Testis (tissue), 5 donors: ENCODE measurements at regions of chr12 and their contacts with region 1.

Region 1: GRCh38 chr12:110698171-110698902 is 9.4 kb upstream of the HVCN1 start:
- DNase-seq: peak; percentile 88
- H3K4me3 ChIP-seq: no peak overlapping the region
- H3K27ac ChIP-seq: peak overlapping the region; percentile 41 to 76
- H3K4me1 ChIP-seq: peaks cover 26% of the 10 kb centered on the region
- H3K27me3 ChIP-seq: no peaks in the 10 kb centered on the region
- CTCF ChIP-seq: peak; percentile 65 to 83 (median 82)
- POLR2A ChIP-seq: no peak

Region 2: DNA sequence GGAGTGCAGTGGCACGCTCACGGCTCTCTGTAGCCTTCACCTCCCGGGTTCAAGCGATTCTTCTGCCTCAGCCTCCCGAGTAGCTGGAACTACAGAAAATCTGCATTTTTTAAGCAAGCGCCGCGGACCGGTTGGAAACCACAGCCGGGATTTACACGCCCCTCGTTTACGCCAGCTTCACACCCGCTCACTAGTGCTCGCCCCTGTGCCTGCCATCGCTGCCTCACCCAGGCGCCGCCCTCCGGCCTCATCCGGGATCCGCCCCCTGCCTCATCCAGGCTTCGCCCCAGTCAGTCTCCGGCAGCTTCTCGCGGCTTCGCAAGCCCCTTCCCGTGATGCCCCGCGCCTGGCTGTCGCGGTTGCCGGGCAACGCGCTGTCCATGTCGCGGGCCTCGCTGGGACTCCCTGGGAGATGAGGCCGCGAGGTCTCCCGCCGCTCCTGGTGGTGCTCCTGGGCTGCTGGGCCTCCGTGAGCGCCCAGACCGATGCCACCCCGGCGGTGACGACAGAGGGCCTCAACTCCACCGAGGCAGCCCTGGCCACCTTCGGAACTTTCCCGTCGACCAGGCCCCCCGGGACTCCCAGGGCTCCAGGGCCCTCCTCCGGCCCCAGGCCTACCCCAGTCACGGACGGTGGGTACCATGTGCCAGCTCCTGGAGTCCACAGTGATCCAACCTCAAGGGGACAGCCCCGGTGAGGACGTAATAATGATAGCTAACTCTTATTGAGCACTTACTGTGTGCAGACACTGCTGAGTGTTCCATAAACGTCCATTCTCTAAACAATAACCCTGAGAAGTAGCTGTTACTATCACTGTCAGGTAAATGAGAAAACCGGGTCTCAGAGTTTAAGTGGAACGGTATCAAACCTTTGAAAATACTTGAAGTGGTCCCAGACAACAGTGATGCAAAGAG is 84.3 kb before region 1 on chr12 and contains the start of gene TCTN1:
- intact Hi-C with region 1: loop called (anchors 10 kb)
- DNase-seq: peak; percentile 98
- H3K4me3 ChIP-seq: peak within 1 kb of the TSS; percentile 69 to 70
- H3K27ac ChIP-seq: peak within 1 kb of the TSS; percentile 32 to 70
- H3K4me1 ChIP-seq: peaks cover 7% of the 10 kb centered on the region
- H3K27me3 ChIP-seq: no peaks in the 10 kb centered on the region
- CTCF ChIP-seq: no peak
- POLR2A ChIP-seq: peak; percentile 50
- total RNA-seq, gene TCTN1: 75.3 to 109 TPM

Region 3: DNA sequence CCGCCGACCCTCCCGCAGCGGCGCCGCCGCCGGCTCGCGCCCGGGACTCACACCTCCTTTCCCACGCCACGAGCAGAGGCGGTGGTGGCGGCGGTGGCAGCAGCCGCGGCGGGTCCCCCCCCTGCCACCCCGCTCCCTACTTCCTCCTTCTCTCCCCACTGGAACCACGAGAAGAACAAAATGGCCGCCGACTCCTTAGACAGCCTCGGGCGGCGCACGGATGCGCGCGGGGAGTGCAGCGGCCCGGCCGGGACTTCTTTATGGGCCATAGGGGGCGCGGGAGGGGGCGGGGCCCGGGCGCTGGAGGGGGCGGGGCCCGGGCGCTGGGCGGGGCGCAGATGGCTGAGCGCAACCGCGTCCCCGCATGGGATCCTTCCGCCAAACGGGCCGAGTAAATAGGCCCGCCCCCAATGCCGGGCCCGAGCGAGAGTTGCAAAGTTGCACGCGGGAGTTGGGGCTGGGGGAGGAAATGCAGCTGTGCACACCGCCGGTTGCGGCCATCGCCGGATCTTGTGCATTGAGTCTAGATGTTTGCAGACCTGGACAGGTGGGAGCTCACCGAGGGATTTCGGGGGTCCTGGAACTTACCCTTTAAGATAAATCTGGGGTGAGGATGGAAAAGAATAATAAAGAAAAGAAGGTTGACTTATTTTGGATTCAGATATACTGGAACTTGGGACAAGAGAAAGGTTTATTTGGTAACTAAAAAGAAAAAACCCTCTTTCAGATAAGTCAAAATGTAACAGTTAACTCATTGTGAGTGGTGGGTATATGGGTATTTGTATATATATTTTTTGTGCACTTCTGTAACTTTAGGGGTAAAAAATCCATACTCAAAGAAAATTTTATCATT is 44.6 kb after region 1 on chr12 and contains the start of gene PPP1CC:
- intact Hi-C with region 1: no loop called
- DNase-seq: peak; percentile 97
- H3K4me3 ChIP-seq: peak within 1 kb of the TSS; percentile 99 to 100
- H3K27ac ChIP-seq: peak within 1 kb of the TSS; percentile 89 to 95
- H3K4me1 ChIP-seq: peaks cover 28% of the 10 kb centered on the region
- H3K27me3 ChIP-seq: no peaks in the 10 kb centered on the region
- CTCF ChIP-seq: no peak
- POLR2A ChIP-seq: peak; percentile 29
- total RNA-seq, gene PPP1CC: 143 to 160 TPM